GM12878 (cell line): ENCODE measurements at regions of chr15 and their contacts with region 1.

Region 1: DNA sequence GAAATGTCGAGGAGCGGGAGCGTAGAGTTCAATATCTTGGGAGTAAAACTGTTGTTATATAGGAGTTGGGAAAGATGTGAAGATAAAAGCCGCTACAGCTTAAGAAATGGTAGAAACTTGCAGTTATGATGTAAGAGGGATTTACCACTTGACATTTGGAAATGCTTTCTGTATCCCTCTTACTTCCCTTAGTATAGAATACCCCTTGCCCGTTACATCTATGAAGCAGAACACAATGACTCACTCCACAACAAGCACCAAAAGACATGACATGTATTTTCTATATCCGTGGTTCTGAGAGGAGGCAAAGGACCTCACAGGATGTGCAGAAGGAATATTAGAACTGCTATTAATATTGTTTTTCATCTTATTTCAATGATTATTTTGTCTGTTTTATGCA is 254.2 kb upstream of the NR2F2 start:
- DNase-seq: no peak
- ATAC-seq: no peak
- H3K4me3 ChIP-seq: no peak overlapping the region
- H3K27ac ChIP-seq: no peak overlapping the region
- H3K4me1 ChIP-seq: no peaks in the 10 kb centered on the region
- H3K27me3 ChIP-seq: no peaks in the 10 kb centered on the region
- CTCF ChIP-seq: no peak
- EP300 ChIP-seq: no peak
- POLR2A ChIP-seq: no peak
- RAD21 ChIP-seq: no peak

Region 2: DNA sequence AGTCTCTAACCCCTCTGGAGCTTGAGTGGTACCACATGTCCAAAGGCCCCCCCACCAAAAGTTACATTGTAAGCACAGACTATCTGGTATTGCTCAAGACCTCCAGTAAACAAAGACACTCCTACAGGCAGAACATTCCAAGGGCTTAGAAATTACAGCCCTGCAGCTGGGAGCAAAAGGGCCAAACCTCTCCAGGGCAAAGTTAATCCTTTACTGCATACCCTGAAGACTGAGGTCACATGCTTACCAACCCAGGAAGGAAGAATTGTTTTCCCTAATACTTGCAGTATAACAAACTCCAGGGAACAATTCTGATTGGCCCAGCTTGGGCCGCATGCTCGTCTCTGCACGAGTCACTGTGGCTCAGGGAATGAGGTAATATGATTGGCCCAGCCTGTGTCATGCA is 12.0 kb before region 1 on chr15:
- CTCF ChIA-PET with region 1: interaction called, 5 read pairs
- POLR2A ChIA-PET with region 1: no interaction called
- RAD21 ChIA-PET with region 1: no interaction called
- SMC1A ChIA-PET with region 1: interaction called, 18 read pairs
- in situ Hi-C with region 1: no loop called
- intact Hi-C with region 1: no loop called
- DNase-seq: no peak
- ATAC-seq: no peak
- H3K4me3 ChIP-seq: no peak overlapping the region
- H3K27ac ChIP-seq: no peak overlapping the region
- H3K4me1 ChIP-seq: peaks cover 8% of the 10 kb centered on the region
- H3K27me3 ChIP-seq: no peaks in the 10 kb centered on the region
- CTCF ChIP-seq: no peak
- EP300 ChIP-seq: no peak
- POLR2A ChIP-seq: no peak
- RAD21 ChIP-seq: no peak

Region 3: GRCh38 chr15:96484830-96485229 is 408.5 kb after region 1 on chr15:
- CTCF ChIA-PET with region 1: no interaction called
- POLR2A ChIA-PET with region 1: no interaction called
- RAD21 ChIA-PET with region 1: no interaction called
- SMC1A ChIA-PET with region 1: no interaction called
- in situ Hi-C with region 1: no loop called
- intact Hi-C with region 1: no loop called
- DNase-seq: no peak
- ATAC-seq: no peak
- H3K4me3 ChIP-seq: no peak overlapping the region
- H3K27ac ChIP-seq: no peak overlapping the region
- H3K4me1 ChIP-seq: no peaks in the 10 kb centered on the region
- H3K27me3 ChIP-seq: no peaks in the 10 kb centered on the region; a peak in 1 of 4 replicates
- CTCF ChIP-seq: no peak
- EP300 ChIP-seq: no peak
- POLR2A ChIP-seq: no peak
- RAD21 ChIP-seq: no peak